ENCODE measurements at regions of chr16 and their contacts with region 1.

Region 1: DNA sequence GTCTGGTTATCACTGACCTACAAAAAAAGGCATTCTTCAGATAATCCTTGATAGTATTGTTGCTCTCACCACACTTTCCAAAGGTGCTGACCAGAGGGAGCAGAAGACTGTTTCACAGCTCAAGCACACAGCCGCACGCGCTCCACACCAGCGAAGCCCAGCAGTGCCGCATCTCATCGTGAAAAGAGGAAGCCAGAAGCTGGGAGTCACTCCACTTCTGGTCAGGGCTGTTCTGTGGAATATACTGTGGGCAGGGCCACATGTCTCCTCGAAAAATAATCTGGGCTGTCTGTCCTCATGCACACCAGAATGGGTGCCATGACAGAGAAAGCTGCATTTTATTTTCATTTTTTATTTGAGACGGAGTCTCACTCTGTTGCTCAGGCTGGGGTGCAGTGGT is 7.3 kb upstream of the PRSS36 start:
- DNase-seq: peak in 2 of 3 donors; percentile 68 to 74
- H3K4me3 ChIP-seq: peak overlapping the region in 2 of 7 experiments; percentile 11 to 50
- H3K27ac ChIP-seq: no peak overlapping the region
- H3K4me1 ChIP-seq: peaks cover 0 to 11% (median 6%) of the 10 kb centered on the region in 4 experiments
- H3K27me3 ChIP-seq: peaks cover 0 to 1% (median 0%) of the 10 kb centered on the region in 5 experiments

Region 2: DNA sequence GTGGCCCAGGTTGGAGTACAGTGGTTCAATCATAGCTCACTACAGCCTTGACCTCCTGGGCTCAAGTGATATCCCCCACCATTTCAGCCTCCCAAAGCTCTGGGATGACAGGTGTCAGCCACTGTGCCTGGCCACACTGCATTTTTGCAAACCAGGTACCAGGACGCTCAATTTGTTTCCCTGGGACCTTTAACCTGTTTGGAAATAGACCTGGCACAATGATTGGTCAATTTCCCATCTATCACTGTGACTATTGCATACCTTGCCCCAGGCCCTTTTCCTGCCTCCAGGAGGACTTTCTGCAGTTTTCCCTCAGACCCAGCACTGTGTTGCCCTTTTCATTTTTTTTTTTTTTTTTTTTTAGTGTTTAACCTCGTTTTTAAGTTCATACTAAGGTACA is 11.7 kb after region 1 on chr16:
- CTCF ChIA-PET with region 1: interaction called, 17 read pairs
- POLR2A ChIA-PET with region 1: no interaction called
- DNase-seq: no peak
- H3K4me3 ChIP-seq: no peak overlapping the region
- H3K27ac ChIP-seq: no peak overlapping the region
- H3K4me1 ChIP-seq: no peaks in the 10 kb centered on the region
- H3K27me3 ChIP-seq: no peaks in the 10 kb centered on the region

Region 3: GRCh38 chr16:31188450-31189411 is 31.6 kb after region 1 on chr16:
- CTCF ChIA-PET with region 1: no interaction called
- POLR2A ChIA-PET with region 1: no interaction called
- DNase-seq: no peak
- H3K4me3 ChIP-seq: no peak overlapping the region
- H3K27ac ChIP-seq: peak overlapping the region in 1 of 2 experiments; percentile 1
- H3K4me1 ChIP-seq: peaks cover 4 to 27% (median 14%) of the 10 kb centered on the region in 4 experiments
- H3K27me3 ChIP-seq: no peaks in the 10 kb centered on the region

Region 4: DNA sequence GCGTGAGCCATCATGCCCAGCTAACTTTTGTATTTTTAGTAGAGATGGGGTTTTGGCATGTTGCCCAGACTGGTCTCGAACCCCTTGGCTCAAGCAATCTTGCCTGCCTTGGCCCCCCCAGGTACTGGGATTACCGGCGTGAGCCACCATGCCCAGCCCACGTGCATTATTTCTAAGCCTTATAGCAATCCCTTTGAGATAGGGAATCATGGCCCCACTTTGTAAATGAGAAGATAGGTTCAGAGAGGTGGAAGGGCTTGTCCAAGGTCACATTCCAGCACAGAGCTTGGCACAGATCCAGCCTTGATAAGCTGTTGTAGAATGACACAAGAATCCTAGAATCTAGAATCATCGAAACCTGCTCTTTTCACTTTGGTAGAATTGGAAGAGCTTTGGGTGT is 49.6 kb after region 1 on chr16:
- CTCF ChIA-PET with region 1: no interaction called
- POLR2A ChIA-PET with region 1: no interaction called
- DNase-seq: no peak
- H3K4me3 ChIP-seq: no peak overlapping the region
- H3K27ac ChIP-seq: no peak overlapping the region
- H3K4me1 ChIP-seq: peaks cover 0 to 17% (median 12%) of the 10 kb centered on the region in 4 experiments
- H3K27me3 ChIP-seq: no peaks in the 10 kb centered on the region

Measured in common myeloid progenitor, CD34-positive (primary cell).